Caco-2 (cell line): ENCODE measurements at regions of chr2 and their contacts with region 1.

Region 1: GRCh38 chr2:133641497-133641896 is 73.2 kb upstream of the NCKAP5 start:
- DNase-seq: peak; percentile 81
- H3K4me3 ChIP-seq: no peak overlapping the region
- H3K4me3 Mint-ChIP-seq: no peak overlapping the region
- H3K27ac Mint-ChIP-seq: peak overlapping the region; percentile 7
- H3K4me1 ChIP-seq: peaks cover 9% of the 10 kb centered on the region
- H3K4me1 Mint-ChIP-seq: no peaks in the 10 kb centered on the region
- H3K27me3 ChIP-seq: no peaks in the 10 kb centered on the region
- H3K27me3 Mint-ChIP-seq: peaks cover 6% of the 10 kb centered on the region
- CTCF ChIP-seq: peak; percentile 33 to 52

Region 2: DNA sequence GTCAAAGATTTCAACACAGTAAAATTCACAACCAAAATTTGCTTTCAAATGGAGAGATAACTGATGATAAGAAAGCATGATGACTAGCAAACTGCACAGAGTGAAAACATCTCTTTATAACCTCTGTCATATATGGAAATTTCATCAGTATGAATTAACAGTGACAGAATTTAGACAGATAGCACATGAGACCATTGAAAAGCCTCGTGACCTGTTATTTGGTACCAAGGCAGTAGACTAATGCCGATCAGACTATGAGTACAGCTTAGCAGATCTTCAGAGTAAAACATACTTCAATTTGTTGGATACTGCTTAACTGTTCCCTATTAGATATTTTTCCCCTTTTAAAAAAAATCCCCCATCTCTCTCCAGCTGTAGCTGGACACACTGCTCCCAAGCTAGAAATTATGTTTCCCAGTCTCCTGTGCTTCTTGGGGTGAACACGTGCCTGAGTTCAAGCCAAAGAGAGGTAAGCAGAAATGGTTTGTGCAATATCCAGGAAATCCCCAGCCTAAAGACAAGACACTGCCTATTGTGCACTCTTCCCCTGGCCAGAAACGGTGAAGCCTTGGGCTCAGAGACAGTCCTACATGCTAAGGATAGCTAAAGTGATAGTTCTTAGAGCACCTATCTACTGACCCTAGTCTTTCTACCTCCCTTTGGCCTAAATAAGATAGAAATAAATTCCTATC is 329.3 kb before region 1 on chr2:
- CTCF ChIA-PET with region 1: no interaction called
- POLR2A ChIA-PET with region 1: no interaction called
- intact Hi-C with region 1: no loop called
- DNase-seq: no peak
- H3K4me3 ChIP-seq: no peak overlapping the region
- H3K4me3 Mint-ChIP-seq: no peak overlapping the region
- H3K27ac Mint-ChIP-seq: no peak overlapping the region
- H3K4me1 ChIP-seq: no peaks in the 10 kb centered on the region
- H3K4me1 Mint-ChIP-seq: no peaks in the 10 kb centered on the region
- H3K27me3 ChIP-seq: no peaks in the 10 kb centered on the region; the same call in 1 of the 2 replicates
- H3K27me3 Mint-ChIP-seq: peaks cover 5% of the 10 kb centered on the region
- CTCF ChIP-seq: no peak

Region 3: GRCh38 chr2:133517876-133518275 is 123.6 kb before region 1 on chr2:
- CTCF ChIA-PET with region 1: interaction called, 4 read pairs
- POLR2A ChIA-PET with region 1: no interaction called
- intact Hi-C with region 1: loop called (anchors 1 kb)
- DNase-seq: no peak
- H3K4me3 ChIP-seq: no peak overlapping the region
- H3K4me3 Mint-ChIP-seq: no peak overlapping the region
- H3K27ac Mint-ChIP-seq: no peak overlapping the region
- H3K4me1 ChIP-seq: no peaks in the 10 kb centered on the region
- H3K4me1 Mint-ChIP-seq: no peaks in the 10 kb centered on the region
- H3K27me3 ChIP-seq: no peaks in the 10 kb centered on the region
- H3K27me3 Mint-ChIP-seq: no peaks in the 10 kb centered on the region
- CTCF ChIP-seq: no peak

Region 4: DNA sequence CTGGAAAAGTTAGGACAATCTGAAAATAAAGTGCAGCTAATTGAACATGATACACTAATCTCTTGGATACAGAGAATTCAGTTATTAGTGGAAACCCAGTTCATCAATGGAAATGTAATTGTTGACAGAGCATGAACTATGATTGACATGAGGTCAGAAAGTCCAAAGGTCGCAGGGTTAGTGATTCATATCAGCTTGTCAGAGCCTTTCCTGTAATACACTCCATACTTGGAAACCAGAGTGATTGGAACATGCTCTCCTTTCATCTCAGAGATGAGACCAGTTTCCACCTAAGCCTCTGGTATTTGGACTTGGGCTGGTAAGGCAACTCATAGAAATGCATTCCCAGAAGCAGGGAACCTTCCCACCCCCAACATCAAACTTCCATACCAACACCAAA is 64.8 kb before region 1 on chr2:
- CTCF ChIA-PET with region 1: no interaction called
- POLR2A ChIA-PET with region 1: no interaction called
- intact Hi-C with region 1: loop called (anchors 1 kb)
- DNase-seq: peak; percentile 62 to 68
- H3K4me3 ChIP-seq: no peak overlapping the region
- H3K4me3 Mint-ChIP-seq: peak overlapping the region; percentile 42
- H3K27ac Mint-ChIP-seq: peak overlapping the region; percentile 71
- H3K4me1 ChIP-seq: peaks cover 16% of the 10 kb centered on the region
- H3K4me1 Mint-ChIP-seq: peaks cover 25% of the 10 kb centered on the region
- H3K27me3 ChIP-seq: no peaks in the 10 kb centered on the region
- H3K27me3 Mint-ChIP-seq: no peaks in the 10 kb centered on the region
- CTCF ChIP-seq: no peak